Ascending aorta (tissue), 2 donors: ENCODE measurements at regions of chr3 and their contacts with region 1.

Region 1: DNA sequence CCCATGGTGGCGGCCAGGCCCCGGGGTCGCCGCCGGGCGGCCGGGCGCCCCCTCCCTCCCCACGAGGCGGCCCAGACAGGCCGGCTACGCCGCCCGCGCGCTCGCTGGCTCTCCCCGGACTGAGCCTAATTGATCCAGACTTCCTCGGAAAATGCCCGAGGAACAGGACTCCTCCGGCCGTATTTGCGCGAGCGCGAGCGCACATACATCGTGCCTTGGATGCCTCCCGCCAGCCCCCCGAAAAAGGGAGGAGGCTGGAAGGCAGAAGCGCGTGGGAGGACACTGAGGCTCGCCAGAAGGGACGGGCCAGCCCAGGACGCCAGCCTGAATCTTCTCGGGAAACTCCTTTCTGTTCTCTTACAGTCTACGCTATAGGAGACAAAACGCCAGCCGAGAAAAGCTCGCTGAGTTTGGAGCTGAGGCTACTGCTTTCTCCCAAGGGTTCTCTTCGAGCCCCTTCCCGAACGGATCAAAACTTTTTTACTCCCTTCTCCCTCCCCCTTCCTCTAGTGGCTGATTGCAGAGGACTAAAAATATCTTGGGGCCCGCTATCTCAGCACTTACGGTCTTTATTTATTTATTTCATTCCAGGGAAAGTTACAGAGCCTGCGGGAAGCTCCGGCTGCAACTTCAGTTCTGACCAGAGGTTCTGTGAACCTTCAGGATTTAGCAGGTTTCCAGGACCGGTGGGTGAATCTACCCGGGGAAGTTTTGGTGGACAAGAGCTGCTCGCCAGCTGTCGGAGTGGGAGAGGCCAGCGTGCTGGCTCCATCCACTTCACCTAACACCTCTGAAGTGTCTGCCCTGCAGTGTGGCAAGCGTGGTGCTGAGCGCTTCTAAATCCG is at the start of gene PDZRN3:
- DNase-seq: peak in 1 of 2 donors; percentile 79
- H3K4me3 ChIP-seq: peak within 1 kb of the TSS; percentile 82 to 91
- H3K27ac ChIP-seq: peak within 1 kb of the TSS; percentile 91 to 93
- H3K4me1 ChIP-seq: peaks cover 0 to 12% of the 10 kb centered on the region in 2 donors
- H3K27me3 ChIP-seq: no peaks in the 10 kb centered on the region
- CTCF ChIP-seq: no peak
- total RNA-seq, gene PDZRN3: 71.9 TPM

Region 2: GRCh38 chr3:73572368-73572767 is 52.7 kb before region 1 on chr3:
- intact Hi-C with region 1: loop called (anchors 5 kb)
- DNase-seq: no peak
- H3K4me3 ChIP-seq: no peak overlapping the region
- H3K27ac ChIP-seq: peak overlapping the region in 1 of 2 donors; percentile 50
- H3K4me1 ChIP-seq: peaks cover 3 to 14% of the 10 kb centered on the region in 2 donors
- H3K27me3 ChIP-seq: no peaks in the 10 kb centered on the region
- CTCF ChIP-seq: no peak

Region 3: GRCh38 chr3:73586190-73586589 is 38.9 kb before region 1 on chr3:
- intact Hi-C with region 1: no loop called
- DNase-seq: no peak
- H3K4me3 ChIP-seq: no peak overlapping the region
- H3K27ac ChIP-seq: no peak overlapping the region
- H3K4me1 ChIP-seq: peaks cover 0 to 8% of the 10 kb centered on the region in 2 donors
- H3K27me3 ChIP-seq: no peaks in the 10 kb centered on the region
- CTCF ChIP-seq: no peak

Region 4: GRCh38 chr3:73766599-73767381 is 141.7 kb after region 1 on chr3:
- intact Hi-C with region 1: loop called (anchors 5 kb)
- DNase-seq: no peak
- H3K4me3 ChIP-seq: peak overlapping the region; percentile 44 to 59
- H3K27ac ChIP-seq: peak overlapping the region; percentile 80 to 83
- H3K4me1 ChIP-seq: peaks cover 0 to 9% of the 10 kb centered on the region in 2 donors
- H3K27me3 ChIP-seq: no peaks in the 10 kb centered on the region
- CTCF ChIP-seq: no peak

Region 5: GRCh38 chr3:73827725-73828211 is 202.7 kb after region 1 on chr3:
- intact Hi-C with region 1: loop called (anchors 5 kb)
- DNase-seq: peak in 1 of 2 donors; percentile 73
- H3K4me3 ChIP-seq: no peak overlapping the region
- H3K27ac ChIP-seq: peak overlapping the region; percentile 87 to 90
- H3K4me1 ChIP-seq: peaks cover 5 to 32% of the 10 kb centered on the region in 2 donors
- H3K27me3 ChIP-seq: no peaks in the 10 kb centered on the region
- CTCF ChIP-seq: no peak

Region 6: GRCh38 chr3:73839032-73839431 is 214.0 kb after region 1 on chr3:
- intact Hi-C with region 1: no loop called
- DNase-seq: no peak
- H3K4me3 ChIP-seq: no peak overlapping the region
- H3K27ac ChIP-seq: no peak overlapping the region
- H3K4me1 ChIP-seq: no peaks in the 10 kb centered on the region
- H3K27me3 ChIP-seq: no peaks in the 10 kb centered on the region
- CTCF ChIP-seq: no peak